ENCODE measurements at regions of chr16 and their contacts with region 1.

Region 1: DNA sequence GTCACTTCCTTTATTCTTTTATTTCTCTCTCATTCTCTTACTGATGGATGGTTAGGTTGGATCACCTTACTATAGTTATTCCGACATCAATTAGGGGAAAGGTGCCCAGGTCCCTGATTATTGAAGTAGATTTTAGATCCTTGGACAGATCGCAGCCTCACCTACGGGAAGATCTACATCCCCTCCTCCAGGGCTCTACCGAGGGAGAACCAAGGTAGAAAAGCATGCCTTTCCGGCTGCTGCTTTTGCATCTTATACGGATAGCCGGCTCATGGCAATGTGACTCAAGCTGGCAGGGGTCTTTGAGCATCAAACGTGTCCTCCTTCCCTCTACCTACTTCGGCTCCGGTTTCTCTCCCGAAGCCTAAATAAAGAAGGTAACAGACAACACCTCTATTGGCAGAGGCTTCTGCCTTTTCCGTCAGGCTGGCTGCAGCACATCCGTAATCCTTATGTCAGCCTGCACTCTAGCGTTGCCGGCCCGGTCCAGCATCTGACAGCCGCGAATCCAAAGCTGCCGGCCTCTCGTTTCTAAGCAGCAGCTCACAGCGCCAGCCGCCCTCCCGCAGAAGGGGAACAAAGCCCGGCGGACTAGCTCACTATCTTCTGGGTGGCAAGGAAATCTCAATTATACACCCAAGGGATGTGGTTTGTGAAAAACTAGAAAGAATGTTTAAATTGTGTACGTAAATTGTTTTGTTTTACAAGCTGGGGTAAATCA is 46.9 kb downstream of the IRX6 start:
- DNase-seq: peak; percentile 65 to 81
- ATAC-seq: peak; percentile 83 to 90 (median 87)
- H3K4me3 ChIP-seq: no peak overlapping the region
- H3K27ac ChIP-seq: no peak overlapping the region
- H3K4me1 ChIP-seq: peaks cover 6% of the 10 kb centered on the region
- H3K27me3 ChIP-seq: peaks cover 0 to 3% (median 0%) of the 10 kb centered on the region in 3 donors
- CTCF ChIP-seq: peak; percentile 60

Region 2: DNA sequence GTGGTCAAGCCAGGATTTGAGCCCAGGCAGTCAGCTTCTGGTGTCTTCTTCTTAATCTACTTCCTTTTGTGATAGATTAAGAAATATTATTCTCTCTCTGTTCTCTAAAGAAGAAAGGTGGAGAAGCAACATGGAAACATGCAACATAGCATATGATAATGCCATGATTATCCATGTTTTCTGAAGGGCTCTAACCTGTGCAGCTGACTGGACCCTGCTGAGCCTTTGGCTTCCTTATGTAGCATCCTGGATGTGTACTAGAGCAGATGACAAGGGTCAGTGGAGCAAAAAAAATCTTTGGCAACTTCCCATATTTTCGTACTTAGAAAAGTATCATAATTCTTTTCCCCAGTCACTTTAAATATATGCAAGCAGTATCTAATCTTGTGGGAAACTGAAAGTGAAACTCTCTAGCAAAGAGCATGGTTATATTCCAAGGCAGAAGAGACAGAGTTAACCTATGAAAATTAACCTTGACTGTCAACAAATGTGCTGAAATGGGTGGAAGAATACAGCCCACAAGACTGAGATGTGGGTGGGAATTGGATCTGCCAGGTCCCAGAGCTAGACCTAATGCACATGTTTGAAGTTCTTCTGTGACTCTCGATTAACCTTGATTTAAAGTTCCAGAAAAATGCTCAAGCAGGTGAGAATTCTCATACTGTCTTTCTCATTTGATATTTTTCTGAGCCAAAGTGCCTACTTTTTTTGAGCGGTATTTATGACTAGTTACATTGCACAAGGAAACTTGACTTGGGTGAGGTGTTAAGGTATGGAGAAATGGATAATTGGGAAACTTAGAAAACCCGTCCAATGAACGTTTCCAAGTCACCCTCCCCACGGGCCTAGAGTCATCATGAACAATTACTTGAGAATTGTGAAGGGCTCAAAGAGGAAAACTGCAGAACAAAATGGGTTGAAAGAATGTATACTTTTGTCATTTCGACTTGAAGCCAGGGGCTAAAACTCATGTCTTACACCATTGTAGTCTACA is 1418.4 kb before region 1 on chr16:
- intact Hi-C with region 1: loop called in 1 of 2 experiments (anchors 10 kb)
- DNase-seq: no peak
- ATAC-seq: no peak
- H3K4me3 ChIP-seq: no peak overlapping the region
- H3K27ac ChIP-seq: no peak overlapping the region
- H3K4me1 ChIP-seq: peaks cover 11% of the 10 kb centered on the region
- H3K27me3 ChIP-seq: no peaks in the 10 kb centered on the region
- CTCF ChIP-seq: no peak

Region 3: DNA sequence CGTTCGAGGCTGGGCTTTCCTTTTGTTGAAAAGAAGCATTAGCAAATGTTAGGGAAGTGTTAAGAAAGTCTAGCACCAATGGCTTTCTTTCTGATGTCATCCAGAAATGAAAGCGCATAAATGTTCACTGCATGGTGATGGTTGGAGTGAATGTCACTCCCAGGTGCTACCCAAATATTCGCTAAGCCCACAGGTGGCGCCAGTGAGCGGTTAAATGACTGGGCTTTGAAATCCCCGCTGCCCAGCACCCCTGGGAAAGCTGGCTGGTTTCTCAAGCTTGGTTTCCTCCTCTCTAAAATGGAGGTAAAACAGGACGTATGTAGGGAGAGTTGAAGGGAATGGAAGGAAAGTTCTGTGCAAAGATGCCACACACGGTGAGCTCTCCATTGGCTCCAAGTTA is 335.9 kb before region 1 on chr16:
- intact Hi-C with region 1: loop called in 1 of 2 experiments (anchors 10 kb)
- DNase-seq: no peak
- ATAC-seq: peak in 2 of 4 donors; percentile 35 to 71
- H3K4me3 ChIP-seq: no peak overlapping the region
- H3K27ac ChIP-seq: no peak overlapping the region
- H3K4me1 ChIP-seq: no peaks in the 10 kb centered on the region
- H3K27me3 ChIP-seq: no peaks in the 10 kb centered on the region
- CTCF ChIP-seq: peak; percentile 38

Region 4: DNA sequence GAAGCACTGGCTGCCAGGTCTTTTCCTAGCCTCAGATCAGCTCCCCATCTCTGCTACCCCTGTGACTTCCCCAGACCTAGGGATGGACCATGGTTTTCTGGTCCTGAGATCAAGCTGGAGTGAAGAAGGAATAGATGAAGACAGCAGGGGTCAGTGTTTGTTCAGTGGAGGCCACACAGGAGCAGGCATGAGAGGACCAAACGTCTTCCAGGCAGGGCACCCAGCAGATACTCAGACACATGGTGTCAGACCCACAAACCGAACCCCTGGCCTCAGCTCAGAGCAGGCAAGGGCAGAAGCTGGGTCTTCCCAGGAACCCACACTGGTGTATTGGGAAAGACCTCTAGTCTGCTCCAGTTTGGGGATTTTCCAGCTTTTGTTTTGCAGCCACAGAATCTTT is 250.5 kb before region 1 on chr16:
- intact Hi-C with region 1: loop called in 1 of 2 experiments (anchors 2 kb)
- DNase-seq: no peak
- ATAC-seq: peak in 3 of 4 donors; percentile 61 to 73 (median 67)
- H3K4me3 ChIP-seq: no peak overlapping the region
- H3K27ac ChIP-seq: no peak overlapping the region
- H3K4me1 ChIP-seq: no peaks in the 10 kb centered on the region
- H3K27me3 ChIP-seq: no peaks in the 10 kb centered on the region
- CTCF ChIP-seq: peak; percentile 29

Region 5: DNA sequence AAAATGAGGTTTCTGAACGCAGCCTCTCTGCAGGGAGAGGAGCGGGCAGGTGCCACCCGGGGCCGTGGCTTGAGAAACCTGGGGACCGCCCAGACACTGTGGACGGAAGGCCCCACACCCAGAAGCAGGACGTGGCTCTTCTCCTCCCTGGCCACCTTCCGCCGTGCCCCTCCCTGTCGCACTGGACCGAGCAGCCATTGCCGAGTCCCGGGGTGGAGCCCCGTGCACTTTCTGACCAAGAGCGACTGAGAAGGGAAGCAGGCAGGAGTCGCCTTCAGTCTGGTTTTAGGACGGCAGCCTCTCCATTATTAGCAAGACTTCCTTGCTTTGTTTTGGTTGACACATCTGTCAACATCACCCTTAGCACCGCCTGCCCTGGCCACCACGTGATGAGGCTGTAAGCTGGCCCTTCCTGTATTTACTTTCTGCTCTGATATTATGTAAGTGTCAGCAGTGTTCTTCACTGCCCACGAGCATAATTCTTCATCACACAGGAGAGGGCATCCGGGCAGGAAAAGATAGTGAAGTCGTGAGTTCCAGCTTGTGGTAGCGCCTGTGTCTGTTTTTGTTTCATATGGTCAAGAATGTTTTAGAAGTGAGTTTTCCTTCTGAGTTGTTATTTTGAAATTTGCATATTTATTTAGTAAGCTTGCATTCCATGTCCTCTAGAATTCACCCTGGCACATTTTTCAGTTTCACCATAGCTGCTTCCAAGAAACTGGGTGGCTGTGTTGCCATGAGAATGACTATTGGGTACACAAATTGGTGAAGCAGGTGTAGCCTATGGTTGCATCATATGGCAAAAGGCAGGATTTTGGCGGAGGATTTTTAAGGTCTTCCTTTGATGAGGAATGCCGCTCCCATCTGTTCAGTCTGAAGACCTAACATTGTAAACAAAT is 1562.0 kb after region 1 on chr16:
- intact Hi-C with region 1: loop called in 1 of 2 experiments (anchors 5 kb)
- DNase-seq: peak; percentile 74 to 89
- ATAC-seq: peak; percentile 72 to 82 (median 78)
- H3K4me3 ChIP-seq: peak overlapping the region; percentile 92
- H3K27ac ChIP-seq: peak overlapping the region; percentile 99
- H3K4me1 ChIP-seq: peaks cover 36% of the 10 kb centered on the region
- H3K27me3 ChIP-seq: no peaks in the 10 kb centered on the region
- CTCF ChIP-seq: no peak

Measured in psoas muscle (tissue), 8 donors.